Ovary (tissue), 10 donors: ENCODE measurements at regions of chr11 and their contacts with region 1.

Region 1: DNA sequence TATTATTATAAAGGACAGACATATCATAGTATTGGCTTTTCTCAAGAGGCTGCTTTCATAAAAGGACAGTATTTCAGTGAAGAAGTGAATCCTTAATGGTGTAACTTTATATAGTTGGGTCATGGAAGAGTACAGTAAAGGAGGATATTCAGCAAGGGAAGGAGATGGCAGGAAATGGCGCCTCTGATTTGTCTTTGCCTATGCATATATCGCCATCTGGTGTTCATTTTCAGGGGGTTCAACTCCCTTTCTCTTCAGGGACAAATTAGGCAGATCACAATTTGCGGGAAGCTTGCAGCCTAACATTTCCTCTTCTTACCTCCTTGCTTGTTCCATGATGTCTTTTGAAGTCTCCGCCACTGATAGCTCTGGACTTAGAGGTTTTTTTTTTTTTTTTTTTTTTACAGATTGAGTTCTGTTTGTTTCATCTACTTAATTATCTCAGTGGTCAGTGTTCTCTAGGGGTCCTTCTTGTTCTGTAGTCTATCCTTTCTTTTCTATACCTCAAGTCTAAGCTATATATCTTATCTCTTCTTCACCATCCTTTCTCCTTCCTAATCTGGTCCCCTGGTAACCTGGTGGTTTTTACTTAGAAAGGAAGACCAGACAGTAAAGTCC is 21.8 kb upstream of the RRM1 start:
- DNase-seq: peak in 3 of 5 donors; percentile 46 to 64 (median 47)
- H3K4me3 ChIP-seq: no peak overlapping the region
- H3K27ac ChIP-seq: no peak overlapping the region
- H3K4me1 ChIP-seq: peaks cover 8% of the 10 kb centered on the region
- H3K27me3 ChIP-seq: no peaks in the 10 kb centered on the region
- CTCF ChIP-seq: peak; percentile 59 to 94 (median 89)
- EP300 ChIP-seq: no peak
- POLR2A ChIP-seq: no peak

Region 2: GRCh38 chr11:3775736-3776406 is 296.9 kb before region 1 on chr11:
- intact Hi-C with region 1: no loop called
- DNase-seq: no peak
- H3K4me3 ChIP-seq: no peak overlapping the region
- H3K27ac ChIP-seq: no peak overlapping the region
- H3K4me1 ChIP-seq: no peaks in the 10 kb centered on the region
- H3K27me3 ChIP-seq: no peaks in the 10 kb centered on the region
- CTCF ChIP-seq: no peak
- EP300 ChIP-seq: no peak
- POLR2A ChIP-seq: no peak

Region 3: GRCh38 chr11:3841426-3842350 is 231.1 kb before region 1 on chr11:
- intact Hi-C with region 1: loop called in 1 of 4 experiments (anchors 2 kb)
- DNase-seq: peak; percentile 77 to 93 (median 89)
- H3K4me3 ChIP-seq: peak overlapping the region; percentile 96
- H3K27ac ChIP-seq: peak overlapping the region; percentile 92 to 96
- H3K4me1 ChIP-seq: peaks cover 11% of the 10 kb centered on the region
- H3K27me3 ChIP-seq: no peaks in the 10 kb centered on the region
- CTCF ChIP-seq: peak; percentile 76 to 89 (median 83)
- EP300 ChIP-seq: no peak
- POLR2A ChIP-seq: peak; percentile 56

Region 4: DNA sequence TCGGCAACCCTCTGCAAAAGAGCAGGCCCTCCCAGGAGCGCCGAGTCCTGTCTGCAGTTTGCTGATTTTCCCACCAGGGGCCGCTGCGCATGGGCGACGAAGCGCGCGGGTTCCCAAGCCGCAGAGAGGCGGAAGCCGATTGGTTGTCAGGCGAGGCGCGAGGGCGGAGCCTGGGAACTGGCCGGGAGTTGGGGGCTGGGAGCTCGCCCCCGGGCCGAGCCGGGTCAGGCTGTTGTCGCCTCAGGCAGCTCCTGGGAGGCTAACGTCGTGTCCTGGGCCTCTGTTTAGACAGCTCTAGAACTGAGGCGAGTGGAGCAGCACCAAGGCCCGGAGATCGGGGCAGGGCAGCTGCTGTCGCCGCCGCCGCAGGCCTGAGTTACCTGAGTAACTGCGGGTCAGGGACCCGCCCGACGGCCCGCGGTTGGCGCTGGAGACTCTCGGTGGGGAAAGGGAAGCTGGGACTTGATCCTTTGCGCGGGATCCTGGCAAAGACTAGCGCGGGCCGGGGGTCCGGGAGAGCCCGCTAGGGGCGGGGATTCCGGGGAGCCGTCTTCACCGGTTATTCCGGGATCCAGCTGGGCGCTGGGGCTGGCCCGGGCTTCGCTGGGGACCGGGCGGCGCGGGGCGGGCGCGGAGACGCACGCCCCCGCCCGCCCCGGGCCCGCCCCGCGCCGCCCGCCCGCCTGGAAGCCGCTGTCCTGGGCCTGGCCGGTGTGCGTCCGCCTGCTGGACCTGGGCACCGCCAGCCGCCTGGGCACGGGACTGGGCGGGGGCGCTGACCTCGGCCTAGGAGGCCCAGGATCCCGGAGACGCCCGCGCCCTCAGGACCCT is 217.6 kb before region 1 on chr11 and contains the start of gene STIM1:
- intact Hi-C with region 1: loop called (anchors 1 to 5 kb)
- DNase-seq: peak; percentile 93 to 97 (median 95)
- H3K4me3 ChIP-seq: peak within 1 kb of the TSS; percentile 90
- H3K27ac ChIP-seq: peak within 1 kb of the TSS; percentile 68 to 81
- H3K4me1 ChIP-seq: peaks cover 16% of the 10 kb centered on the region
- H3K27me3 ChIP-seq: no peaks in the 10 kb centered on the region
- CTCF ChIP-seq: peak; percentile 98 to 99 (median 98)
- EP300 ChIP-seq: no peak
- POLR2A ChIP-seq: peak; percentile 53
- total RNA-seq, gene STIM1: 26.1 to 68.5 (median 58.7) TPM

Region 5: DNA sequence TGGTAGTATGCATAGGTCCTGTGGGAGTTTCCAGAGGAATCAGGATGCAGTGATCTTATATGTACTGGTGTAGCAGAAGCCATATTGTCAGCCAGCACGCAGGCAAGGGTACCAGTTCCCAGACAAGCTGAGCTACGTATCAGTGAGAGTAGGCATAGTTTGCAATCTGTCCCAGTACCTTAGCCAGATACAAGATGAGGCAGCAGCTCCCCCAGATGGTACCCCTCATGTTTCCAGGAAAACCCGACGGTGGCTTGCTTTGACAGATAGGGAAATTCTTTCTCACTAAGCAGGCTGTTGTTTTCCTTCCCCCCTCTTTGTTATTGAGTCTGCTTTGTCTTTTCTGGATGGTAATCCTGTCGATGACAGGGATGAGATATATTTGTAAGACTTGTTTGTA is 87.9 kb before region 1 on chr11:
- intact Hi-C with region 1: loop called in 1 of 4 experiments (anchors 2 kb)
- DNase-seq: peak in 4 of 5 donors; percentile 35 to 52 (median 45)
- H3K4me3 ChIP-seq: no peak overlapping the region
- H3K27ac ChIP-seq: no peak overlapping the region
- H3K4me1 ChIP-seq: peaks cover 17% of the 10 kb centered on the region
- H3K27me3 ChIP-seq: no peaks in the 10 kb centered on the region
- CTCF ChIP-seq: peak in 1 of 3 donors; percentile 13
- EP300 ChIP-seq: no peak
- POLR2A ChIP-seq: no peak

Region 6: DNA sequence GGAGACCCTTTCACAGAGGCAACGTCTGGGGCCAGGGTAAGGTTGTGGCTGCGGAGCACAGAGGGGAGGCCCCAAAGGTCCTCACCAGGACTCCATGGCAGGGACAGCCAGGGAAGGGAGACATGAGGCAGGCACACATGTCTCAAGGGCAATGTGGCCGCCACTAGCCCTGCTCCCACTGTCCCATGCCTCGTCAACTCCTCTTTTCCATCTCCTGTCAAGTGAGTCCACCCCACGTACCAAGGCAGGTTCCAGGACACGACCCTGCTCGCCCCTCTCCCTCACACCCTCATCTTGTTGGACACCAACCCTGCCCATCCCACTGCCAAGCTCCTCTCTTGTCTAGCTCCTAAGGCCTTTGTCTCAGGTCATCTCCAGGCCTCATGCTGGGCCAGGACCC is 95.0 kb after region 1 on chr11:
- intact Hi-C with region 1: no loop called
- DNase-seq: no peak
- H3K4me3 ChIP-seq: no peak overlapping the region
- H3K27ac ChIP-seq: no peak overlapping the region
- H3K4me1 ChIP-seq: no peaks in the 10 kb centered on the region
- H3K27me3 ChIP-seq: no peaks in the 10 kb centered on the region
- CTCF ChIP-seq: no peak
- EP300 ChIP-seq: no peak
- POLR2A ChIP-seq: no peak